ENCODE measurements at regions of chr11 and their contacts with region 1.

Region 1: DNA sequence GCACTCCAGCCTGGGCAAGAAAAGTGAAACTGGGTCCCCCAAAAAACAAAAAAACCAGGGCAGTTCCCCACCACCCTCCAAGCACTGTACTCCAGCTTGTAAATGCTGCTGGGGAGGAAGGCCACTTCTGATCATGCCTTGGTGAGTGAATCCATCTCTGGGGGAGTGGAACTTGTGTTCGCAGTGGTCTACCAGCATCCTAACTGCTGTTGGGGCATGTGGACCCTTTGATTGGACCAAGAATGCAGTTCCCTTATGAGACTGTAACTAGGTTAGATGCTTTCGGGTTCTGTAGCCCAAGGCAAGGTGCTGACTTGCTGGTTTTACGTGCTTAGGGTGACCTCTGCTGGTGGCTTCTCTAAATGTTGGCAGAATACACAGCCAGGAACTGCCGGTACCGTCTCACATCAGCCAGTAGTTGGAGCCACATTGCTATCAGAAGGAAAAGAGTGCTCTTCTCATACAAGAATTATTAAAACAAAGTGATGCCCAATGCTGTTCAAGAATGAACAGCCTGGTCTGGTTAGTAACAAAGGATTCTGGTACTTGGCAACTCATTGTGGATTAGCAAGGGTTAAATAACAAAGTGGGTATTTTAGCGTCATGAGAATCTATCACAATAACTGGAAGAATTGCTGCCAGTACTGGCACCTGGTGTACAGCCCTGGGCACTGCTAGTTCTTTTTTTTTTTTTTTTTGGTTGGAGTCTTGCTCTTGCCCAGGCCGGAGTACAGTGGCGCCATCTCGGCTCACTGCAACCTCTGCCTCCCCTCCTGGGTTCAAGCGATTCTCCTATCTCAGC is 13.0 kb downstream of the EIF1AD start:
- DNase-seq: peak; percentile 91
- CTCF ChIP-seq: peak; percentile 99

Region 2: DNA sequence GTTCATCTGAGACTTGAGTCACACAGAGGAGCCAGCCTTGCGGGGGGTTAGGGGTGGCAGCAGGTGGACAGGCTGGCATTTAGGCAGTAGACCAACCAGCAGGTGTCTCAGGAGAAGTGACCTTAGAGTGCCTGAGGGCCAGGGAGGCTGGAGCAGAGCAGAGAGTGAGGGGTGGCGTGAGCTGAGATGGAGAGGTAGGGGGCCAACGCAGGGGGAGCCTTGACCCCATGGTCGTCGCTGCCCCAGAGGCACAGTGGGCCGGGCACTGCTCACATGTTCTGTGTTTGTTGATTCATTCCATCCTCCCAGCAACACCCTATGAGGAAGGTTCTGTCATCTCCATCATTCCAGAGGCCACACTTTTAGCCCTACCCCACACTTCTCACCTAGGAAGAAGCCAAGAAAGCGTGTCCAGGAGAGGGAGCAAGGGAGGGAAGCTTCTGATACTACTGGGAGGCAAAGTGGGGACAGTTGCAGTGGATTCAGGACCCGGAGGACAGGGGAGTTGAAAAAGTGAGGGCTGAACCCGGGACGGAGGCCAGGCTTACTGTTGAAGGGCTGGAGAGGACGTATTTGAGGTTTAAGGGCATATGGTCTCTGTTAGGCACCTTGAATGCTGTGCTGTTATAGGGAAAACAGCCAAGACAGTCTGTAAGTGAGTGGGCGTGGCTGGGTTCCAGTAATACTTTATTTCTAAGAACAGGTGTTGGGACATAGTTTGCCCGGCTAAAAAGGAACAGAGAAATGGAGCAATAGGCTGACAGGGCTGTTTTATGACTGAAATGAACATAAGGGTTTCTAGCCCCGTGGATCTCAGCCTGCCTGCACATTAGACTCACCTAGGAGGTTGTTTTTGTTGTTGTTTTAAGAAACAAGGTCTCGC is 20.2 kb before region 1 on chr11:
- CTCF ChIA-PET with region 1: interaction called, 14 read pairs
- POLR2A ChIA-PET with region 1: no interaction called
- DNase-seq: no peak
- CTCF ChIP-seq: no peak